ENCODE measurements at regions of chr1 and their contacts with region 1.

Region 1: GRCh38 chr1:9784508-9785133 is 39.1 kb downstream of the CLSTN1 start:
- DNase-seq: peak; percentile 68
- H3K4me3 ChIP-seq: peak overlapping the region in 1 of 2 experiments; percentile 52; a peak in 1 of 4 replicates
- H3K27ac ChIP-seq: no peak overlapping the region
- H3K4me1 ChIP-seq: no peaks in the 10 kb centered on the region
- H3K27me3 ChIP-seq: no peaks in the 10 kb centered on the region
- CTCF ChIP-seq: peak; percentile 66
- EP300 ChIP-seq: no peak
- RAD21 ChIP-seq: peak; percentile 85

Region 2: DNA sequence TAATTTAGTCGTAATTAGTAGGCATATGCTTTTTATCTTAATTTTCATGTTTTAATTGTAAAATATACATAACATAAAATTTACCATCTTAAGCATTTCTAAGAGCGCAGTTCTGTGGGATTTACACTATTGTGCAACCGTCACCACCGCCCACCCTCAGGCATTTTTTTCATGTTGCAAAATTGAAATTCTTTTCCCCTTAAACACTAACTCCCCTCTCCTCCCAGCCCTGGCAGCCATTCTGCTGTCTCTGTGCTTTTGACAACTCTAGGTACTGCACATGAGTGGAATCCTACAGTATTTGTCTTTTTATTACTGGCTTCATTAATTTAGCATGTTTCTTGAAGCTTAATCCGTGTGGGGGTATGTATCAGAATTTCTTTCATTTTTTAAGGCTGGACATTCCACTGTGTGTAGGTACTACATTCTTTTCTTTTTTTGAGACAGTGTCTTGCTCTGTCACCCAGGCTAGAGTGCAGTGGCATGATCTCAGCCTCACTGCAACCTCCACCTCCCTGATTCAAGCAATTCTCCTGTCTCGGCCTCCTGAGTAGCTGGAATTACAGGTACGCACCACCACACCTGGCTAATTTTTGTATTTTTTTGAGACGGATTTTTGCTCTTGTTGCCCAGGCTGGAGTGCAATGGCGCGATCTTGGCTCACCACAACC is 125.2 kb before region 1 on chr1:
- CTCF ChIA-PET with region 1: no interaction called
- POLR2A ChIA-PET with region 1: no interaction called
- DNase-seq: no peak
- H3K4me3 ChIP-seq: no peak overlapping the region
- H3K27ac ChIP-seq: no peak overlapping the region
- H3K4me1 ChIP-seq: no peaks in the 10 kb centered on the region
- H3K27me3 ChIP-seq: no peaks in the 10 kb centered on the region; the same call in 1 of the 2 replicates
- CTCF ChIP-seq: no peak
- EP300 ChIP-seq: no peak
- RAD21 ChIP-seq: no peak

Region 3: DNA sequence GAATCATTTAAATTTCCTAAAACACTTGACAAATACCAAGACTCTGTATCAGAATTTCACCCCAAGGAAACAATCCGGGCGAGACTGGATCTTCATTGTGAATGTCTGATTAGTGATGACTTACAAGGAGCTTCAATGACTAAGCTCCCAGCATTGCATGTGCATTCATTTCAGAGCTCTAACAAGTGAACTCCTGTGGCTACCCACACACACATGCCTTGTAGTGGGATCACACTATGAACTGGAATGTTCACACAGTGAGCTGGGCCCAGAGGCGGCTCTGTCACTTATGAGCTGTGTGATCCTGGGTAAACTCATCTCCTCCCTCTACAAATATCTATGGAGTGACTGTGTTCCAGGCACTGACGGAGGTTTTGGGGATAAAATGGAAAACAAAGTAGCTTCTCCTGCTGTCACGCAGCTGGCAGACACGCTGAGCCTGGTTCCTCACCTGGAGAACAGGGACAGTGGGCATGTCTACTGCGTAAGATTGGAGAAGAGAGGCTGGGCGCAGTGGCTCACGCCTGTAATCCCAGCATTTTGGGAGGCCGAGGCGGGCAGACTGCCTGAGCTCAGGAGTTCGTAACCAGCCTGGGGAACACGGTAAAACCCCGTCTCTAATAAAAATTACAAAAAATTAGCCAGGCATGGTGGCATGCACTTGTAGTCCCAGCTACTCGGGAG is 17.7 kb before region 1 on chr1:
- CTCF ChIA-PET with region 1: interaction called, 10 read pairs
- POLR2A ChIA-PET with region 1: no interaction called
- DNase-seq: no peak
- H3K4me3 ChIP-seq: no peak overlapping the region
- H3K27ac ChIP-seq: peak overlapping the region in 1 of 2 experiments; percentile 93; a peak in 2 of 4 replicates
- H3K4me1 ChIP-seq: peaks cover 0 to 15% of the 10 kb centered on the region in 2 experiments; a peak in 1 of 4 replicates
- H3K27me3 ChIP-seq: no peaks in the 10 kb centered on the region
- CTCF ChIP-seq: no peak
- EP300 ChIP-seq: peak in 1 of 2 experiments; percentile 38; a peak in 1 of 4 replicates
- RAD21 ChIP-seq: no peak

Region 4: DNA sequence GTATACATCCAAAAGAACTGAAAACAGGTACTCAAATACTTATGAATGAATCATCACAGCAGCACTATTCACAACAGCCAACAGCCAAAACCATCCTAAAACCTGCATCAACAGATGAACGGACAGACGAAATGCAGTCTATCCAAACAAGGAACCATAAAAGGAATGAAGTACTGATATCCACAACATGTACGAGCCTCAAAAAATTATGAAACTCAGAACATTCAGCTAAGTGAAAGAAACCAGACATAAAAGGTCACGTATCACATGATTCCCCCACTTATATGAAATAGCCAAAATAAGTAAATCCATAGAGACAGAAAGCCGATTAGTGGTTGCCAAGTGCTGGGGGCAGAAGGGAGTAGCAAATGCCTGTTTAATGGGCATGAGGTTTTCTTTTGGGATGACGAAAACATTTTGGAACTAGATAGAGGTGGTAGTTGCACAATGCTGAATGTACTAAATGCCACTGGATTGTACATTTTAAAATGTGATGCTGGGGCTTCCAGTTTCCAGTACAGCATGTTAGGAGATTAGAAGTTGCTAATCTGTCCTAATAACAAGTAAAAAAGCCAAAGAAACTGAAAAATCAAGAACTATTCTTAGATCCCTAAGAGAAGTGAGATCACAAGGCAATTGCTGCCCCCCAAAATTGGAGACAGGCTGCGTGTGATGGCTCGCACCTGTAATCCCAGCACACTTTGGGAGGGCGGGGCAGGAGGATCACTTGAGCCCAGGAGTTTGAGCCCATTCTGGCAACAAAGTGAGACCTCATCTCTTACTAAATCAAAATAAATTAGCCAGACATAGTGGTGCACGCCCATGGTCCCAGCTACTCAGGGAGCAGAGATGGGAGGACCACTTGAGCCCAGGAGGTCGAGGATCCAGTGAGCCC is 13.9 kb after region 1 on chr1:
- CTCF ChIA-PET with region 1: interaction called, 10 read pairs
- POLR2A ChIA-PET with region 1: no interaction called
- DNase-seq: no peak
- H3K4me3 ChIP-seq: no peak overlapping the region
- H3K27ac ChIP-seq: no peak overlapping the region
- H3K4me1 ChIP-seq: peaks cover 0 to 6% of the 10 kb centered on the region in 2 experiments; a peak in 2 of 4 replicates
- H3K27me3 ChIP-seq: no peaks in the 10 kb centered on the region
- CTCF ChIP-seq: no peak
- EP300 ChIP-seq: no peak
- RAD21 ChIP-seq: no peak

Region 5: DNA sequence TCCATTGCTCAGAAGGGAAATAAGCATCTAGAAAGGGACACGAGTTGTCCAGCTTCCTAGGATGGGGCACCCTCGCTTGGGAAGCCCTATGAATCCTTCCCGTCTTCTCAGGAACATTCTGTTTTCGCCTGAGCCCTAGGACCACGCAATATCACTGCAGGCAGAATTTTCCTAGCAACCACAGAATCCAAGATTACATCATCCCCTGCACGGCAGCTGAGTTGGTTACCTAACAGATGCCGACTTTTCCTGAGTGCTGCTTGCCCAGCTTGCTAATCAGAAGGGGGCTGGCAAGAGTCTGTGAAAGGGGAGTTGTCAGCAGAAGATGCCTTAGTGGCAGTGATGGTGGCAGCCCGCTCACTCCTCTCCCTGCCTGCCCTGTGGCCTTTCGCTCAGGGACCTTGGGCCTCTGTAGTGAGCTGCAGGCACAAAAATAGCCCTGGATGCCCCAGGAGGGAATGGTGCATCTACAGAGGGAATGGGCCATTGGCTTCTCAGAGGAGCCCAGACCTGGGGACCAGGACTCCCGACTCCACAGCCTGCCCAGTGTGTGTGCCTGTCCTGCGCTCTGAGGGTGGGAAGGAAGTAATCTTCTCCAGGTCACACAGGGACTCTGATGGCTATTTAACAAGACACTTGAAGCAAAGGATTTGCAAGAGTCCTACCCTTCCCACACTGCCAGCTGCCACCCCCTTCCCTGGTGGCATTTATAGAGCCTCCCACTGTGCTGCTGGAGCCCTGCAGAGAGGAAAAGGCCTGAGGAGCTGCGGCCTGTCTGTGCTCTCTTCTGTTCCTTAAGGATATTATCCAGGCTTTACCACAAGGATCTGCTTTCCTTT is 68.0 kb after region 1 on chr1:
- CTCF ChIA-PET with region 1: interaction called, 12 read pairs
- POLR2A ChIA-PET with region 1: no interaction called
- DNase-seq: peak; percentile 68
- H3K4me3 ChIP-seq: no peak overlapping the region
- H3K27ac ChIP-seq: peak overlapping the region in 1 of 2 experiments; percentile 47; a peak in 1 of 4 replicates
- H3K4me1 ChIP-seq: peaks cover 0 to 11% of the 10 kb centered on the region in 2 experiments; a peak in 1 of 4 replicates
- H3K27me3 ChIP-seq: no peaks in the 10 kb centered on the region
- CTCF ChIP-seq: no peak
- EP300 ChIP-seq: no peak
- RAD21 ChIP-seq: no peak

Region 6: DNA sequence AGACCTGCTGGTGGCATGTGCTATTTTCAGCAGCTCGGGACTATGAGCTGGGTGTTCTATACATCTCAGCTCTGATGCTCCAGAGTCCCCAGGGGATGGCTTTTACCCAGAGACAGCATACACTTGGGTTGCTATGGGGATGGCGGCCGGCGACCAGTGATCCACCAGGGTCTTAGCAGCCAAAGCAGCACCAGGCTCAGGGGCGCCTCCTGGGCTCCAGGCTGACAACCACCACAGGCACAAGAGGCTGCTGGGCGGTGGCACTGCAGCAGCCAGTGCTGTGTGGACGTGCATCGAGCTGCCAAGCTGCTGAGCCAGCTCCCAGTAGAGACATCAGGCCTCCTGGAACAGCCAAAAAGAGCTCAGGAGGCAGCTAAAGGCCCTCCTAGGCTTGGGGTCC is 76.7 kb after region 1 on chr1:
- CTCF ChIA-PET with region 1: interaction called, 175 read pairs
- POLR2A ChIA-PET with region 1: no interaction called
- DNase-seq: no peak
- H3K4me3 ChIP-seq: no peak overlapping the region
- H3K27ac ChIP-seq: no peak overlapping the region
- H3K4me1 ChIP-seq: peaks cover 0 to 4% of the 10 kb centered on the region in 2 experiments; a peak in 1 of 4 replicates
- H3K27me3 ChIP-seq: no peaks in the 10 kb centered on the region
- CTCF ChIP-seq: no peak
- EP300 ChIP-seq: no peak
- RAD21 ChIP-seq: no peak

Region 7: DNA sequence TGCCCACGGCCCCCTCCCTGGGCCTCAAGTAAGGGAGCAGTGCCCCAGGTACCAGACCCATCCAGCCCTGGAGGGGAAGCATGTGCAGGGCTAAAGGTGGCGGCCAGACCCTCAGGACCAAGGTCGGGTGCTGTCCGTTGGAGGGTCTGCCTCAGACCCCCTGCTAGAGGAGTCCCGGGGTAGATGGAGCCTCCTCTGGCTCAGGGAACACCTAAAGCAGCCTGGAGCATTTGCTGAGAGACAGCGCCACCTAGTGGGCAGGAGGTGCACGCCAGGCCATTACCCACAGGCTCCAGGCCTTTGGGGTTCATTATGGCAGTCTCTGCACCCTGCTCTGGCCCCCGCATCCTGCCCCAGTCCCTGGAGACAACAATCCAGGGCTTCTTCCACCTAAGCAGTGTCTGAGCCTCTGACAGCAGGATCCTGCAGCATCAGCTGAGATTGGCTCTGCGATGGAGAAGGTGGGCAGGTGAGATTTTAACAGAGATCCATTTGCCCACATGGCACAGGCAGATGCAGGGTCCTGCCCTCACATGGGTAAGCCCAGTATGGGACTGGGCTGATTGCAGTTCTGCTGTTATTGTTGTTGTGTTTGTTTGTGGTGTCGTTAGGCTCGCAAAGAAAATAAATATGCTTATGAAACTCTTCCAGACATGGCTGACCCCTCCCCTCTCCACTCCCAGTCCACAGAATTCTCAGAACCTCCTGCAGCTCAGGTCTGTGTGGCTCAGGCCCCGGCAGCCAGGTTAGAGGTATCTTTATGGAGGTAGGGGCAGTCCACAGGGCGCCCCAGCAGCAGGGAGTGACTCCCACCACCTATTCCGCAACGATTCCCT is 83.0 kb after region 1 on chr1:
- CTCF ChIA-PET with region 1: interaction called, 175 read pairs
- POLR2A ChIA-PET with region 1: no interaction called
- DNase-seq: peak; percentile 91
- H3K4me3 ChIP-seq: no peak overlapping the region
- H3K27ac ChIP-seq: no peak overlapping the region
- H3K4me1 ChIP-seq: peaks cover 0 to 4% of the 10 kb centered on the region in 2 experiments; a peak in 1 of 4 replicates
- H3K27me3 ChIP-seq: no peaks in the 10 kb centered on the region
- CTCF ChIP-seq: peak; percentile 94
- EP300 ChIP-seq: no peak
- RAD21 ChIP-seq: peak; percentile 97